Left colon (tissue), 2 donors: ENCODE measurements at regions of chr15 and their contacts with region 1.

Region 1: DNA sequence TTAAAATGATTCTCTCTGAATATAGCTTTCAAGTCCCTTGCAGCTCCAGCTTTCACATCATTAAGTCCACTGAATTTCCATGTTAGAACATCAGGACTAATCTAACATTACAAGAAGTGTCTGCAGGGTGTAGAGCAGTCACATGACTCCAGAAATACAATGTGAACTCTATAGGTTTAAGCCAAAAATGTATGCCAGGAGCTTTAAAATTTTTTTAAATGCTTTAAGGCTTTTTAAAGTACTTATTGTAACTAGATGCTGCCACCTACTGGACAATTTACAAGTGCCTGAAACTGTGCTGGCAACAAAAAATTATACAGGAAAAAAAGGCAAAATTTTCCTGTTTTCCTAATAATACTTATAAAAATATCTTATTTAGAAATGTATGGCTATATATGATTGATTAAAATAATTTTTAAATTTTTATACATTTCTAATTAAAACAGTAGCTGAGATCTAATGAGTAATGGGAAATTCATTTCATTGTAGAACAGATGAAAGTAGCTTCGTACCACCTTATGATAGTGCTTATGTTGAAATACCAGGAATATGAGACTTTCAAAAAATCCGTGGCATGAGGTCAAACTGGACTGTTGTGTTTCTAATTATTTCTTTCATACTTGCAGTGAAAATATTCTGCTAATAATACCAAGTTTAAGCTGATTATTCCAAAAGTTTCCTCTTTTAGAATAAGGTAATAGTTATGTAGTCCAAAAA is 25.7 kb downstream of the FSIP1 start:
- DNase-seq: no peak
- ATAC-seq: peak; percentile 56

Region 2: GRCh38 chr15:38699633-38700230 is 1057.2 kb before region 1 on chr15:
- intact Hi-C with region 1: loop called in 1 of 2 experiments (anchors 10 kb)
- DNase-seq: peak; percentile 51 to 80
- ATAC-seq: peak; percentile 38

Region 3: DNA sequence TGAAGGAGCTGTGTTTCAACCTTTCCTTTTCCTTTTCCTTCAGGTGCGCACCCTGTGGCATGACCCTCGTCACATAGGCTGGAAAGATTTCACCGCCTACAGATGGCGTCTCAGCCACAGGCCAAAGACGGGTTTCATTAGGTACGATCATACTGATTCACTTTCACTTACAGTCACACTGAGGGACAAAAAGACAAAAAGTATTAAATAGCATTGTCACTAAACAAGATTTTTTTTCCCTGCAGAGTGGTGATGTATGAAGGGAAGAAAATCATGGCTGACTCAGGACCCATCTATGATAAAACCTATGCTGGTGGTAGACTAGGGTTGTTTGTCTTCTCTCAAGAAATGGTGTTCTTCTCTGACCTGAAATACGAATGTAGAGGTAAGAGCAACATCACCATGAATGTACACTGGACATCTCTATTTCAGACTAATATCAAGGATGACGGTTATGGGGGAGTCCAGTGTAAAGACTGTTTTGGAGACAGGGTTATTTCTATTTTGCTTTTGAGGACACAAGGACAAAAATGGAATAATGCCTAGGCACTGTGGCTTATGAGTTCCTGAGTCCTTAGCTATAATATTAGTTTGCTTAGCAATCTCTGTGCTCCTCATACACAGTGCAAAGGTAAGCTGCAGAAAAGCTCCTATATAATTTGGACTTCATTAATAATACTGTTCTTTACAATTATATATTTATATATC is 162.8 kb before region 1 on chr15:
- intact Hi-C with region 1: loop called in 1 of 2 experiments (anchors 10 kb)
- DNase-seq: peak in 1 of 2 donors; percentile 46
- ATAC-seq: peak; percentile 45

Region 4: DNA sequence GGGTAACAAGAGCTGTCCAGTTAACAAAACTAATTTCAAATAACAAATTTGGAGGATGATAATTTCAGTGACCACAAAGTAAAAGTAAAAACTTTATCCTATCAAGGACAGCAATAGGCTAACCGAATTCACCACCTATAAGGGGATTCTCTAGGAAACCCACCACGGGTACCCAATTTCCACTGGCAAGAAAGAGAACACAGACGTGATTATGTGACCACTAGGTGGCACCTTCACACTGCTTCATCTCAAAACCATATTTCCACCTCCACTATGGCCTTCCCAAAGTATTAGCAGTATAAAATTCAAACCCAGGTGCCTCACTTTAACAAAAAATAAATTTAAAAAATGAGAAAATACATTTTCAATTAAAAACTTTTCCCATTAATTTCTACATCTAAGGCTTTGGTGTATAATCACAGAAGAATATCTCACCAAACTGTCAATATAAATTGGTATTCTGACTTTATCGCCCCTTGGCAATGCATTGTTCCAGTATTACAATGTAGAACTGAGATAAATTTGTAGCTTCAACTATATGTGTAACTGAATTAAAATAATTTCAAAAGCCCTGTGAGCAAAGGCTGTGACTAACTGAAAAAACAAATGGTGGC is 70.9 kb before region 1 on chr15:
- intact Hi-C with region 1: loop called in 1 of 2 experiments (anchors 5 kb)
- DNase-seq: peak in 1 of 2 donors; percentile 39
- ATAC-seq: peak; percentile 86

Region 5: DNA sequence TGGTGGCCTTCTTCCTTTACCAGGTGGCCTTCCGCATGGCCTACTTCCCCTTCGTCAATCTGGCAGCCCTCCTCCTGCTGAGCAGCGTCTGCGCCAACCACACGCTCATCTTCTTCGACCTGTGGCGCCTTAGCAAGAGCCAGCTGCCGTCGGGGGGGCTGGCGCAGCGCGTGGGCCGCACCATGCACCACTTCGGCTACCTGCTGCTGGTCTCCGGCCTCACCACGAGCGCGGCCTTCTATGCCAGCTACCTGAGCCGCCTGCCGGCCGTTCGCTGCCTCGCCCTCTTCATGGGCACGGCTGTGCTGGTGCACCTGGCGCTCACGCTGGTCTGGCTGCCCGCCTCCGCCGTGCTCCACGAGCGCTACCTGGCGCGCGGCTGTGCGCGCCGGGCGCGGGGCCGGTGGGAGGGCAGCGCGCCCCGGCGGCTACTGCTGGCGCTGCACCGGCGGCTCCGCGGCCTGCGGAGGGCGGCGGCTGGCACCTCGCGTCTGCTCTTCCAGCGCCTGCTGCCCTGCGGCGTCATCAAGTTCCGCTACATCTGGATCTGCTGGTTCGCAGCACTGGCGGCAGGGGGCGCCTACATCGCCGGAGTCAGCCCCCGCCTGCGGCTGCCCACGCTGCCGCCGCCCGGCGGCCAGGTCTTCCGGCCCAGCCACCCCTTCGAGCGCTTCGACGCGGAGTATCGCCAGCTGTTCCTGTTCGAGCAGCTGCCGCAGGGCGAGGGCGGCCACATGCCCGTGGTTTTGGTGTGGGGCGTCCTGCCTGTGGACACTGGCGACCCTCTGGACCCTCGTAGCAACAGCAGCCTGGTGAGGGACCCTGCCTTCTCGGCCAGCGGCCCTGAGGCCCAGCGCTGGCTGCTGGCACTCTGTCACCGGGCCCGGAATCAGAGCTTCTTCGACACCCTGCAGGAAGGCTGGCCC is 611.0 kb after region 1 on chr15:
- intact Hi-C with region 1: no loop called
- DNase-seq: peak; percentile 88 to 91
- ATAC-seq: peak; percentile 87